CD4-positive, alpha-beta T cell (primary cell): ENCODE measurements at regions of chr10 and their contacts with region 1.

Region 1: GRCh38 chr10:17430647-17431355 is 23.6 kb downstream of the ST8SIA6 start:
- DNase-seq: peak; percentile 48 to 87 (median 64)
- ATAC-seq: no peak
- H3K4me3 ChIP-seq: no peak overlapping the region
- H3K4me3 Mint-ChIP-seq: peak overlapping the region; percentile 76
- H3K27ac ChIP-seq: no peak overlapping the region
- H3K27ac Mint-ChIP-seq: peak overlapping the region; percentile 93
- H3K4me1 ChIP-seq: peaks cover 46% of the 10 kb centered on the region
- H3K4me1 Mint-ChIP-seq: peaks cover 52% of the 10 kb centered on the region
- H3K27me3 ChIP-seq: no peaks in the 10 kb centered on the region
- H3K27me3 Mint-ChIP-seq: peaks cover 4% of the 10 kb centered on the region
- CTCF ChIP-seq: peak; percentile 98

Region 2: DNA sequence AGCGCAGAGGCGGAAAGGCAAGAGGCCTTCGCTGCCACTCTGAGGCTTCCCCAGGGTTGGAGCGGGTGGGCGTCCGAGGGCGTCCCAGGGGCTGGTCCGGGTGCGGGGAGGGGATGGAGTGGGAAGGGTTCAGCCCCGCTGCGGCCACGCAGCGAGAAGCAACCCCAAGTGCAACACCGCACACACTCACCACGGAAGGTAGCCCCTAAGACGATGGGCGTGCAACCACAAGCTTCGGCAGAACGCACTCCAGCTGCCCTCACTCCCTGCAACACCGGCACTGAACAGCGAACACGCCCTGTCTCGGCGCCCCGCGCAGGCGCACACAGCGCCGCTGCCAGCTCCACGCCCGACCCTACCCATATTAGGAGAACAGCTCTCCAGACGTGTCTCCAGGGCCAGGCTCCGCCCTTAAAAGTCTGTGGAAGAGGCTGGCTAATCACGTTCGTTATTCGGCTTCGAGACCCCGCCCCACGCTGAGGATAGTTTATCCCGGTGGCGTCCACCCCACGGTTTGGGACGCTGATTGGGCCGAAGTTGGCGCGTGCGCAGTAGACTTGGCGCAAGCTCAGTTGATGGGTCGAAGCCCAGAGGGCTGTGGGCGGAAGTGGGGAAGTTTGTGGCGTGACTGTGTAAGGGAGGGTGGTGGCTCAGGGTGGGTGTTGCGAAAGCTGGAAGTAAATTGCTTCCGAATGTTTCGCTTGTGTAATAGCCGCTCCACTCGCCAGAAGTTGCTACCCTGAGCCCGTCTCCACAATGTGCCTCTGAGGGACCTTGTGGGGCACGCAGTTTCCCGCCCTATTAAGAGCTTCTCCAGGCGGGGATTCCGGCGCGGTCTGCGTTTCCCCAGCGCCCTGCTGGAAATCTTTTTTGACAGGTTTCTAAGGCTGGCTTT is 613.4 kb before region 1 on chr10 and contains the start of gene RSU1:
- CTCF ChIA-PET with region 1: no interaction called
- POLR2A ChIA-PET with region 1: interaction called, 15 read pairs
- intact Hi-C with region 1: no loop called
- DNase-seq: peak; percentile 99 to 100 (median 100)
- ATAC-seq: peak; percentile 96
- H3K4me3 ChIP-seq: peak within 1 kb of the TSS; percentile 78
- H3K4me3 Mint-ChIP-seq: peak within 1 kb of the TSS; percentile 97
- H3K27ac ChIP-seq: peak within 1 kb of the TSS; percentile 82 to 87
- H3K27ac Mint-ChIP-seq: peak within 1 kb of the TSS; percentile 92
- H3K4me1 ChIP-seq: peaks cover 32% of the 10 kb centered on the region
- H3K4me1 Mint-ChIP-seq: peaks cover 50% of the 10 kb centered on the region
- H3K27me3 ChIP-seq: no peaks in the 10 kb centered on the region
- H3K27me3 Mint-ChIP-seq: no peaks in the 10 kb centered on the region
- CTCF ChIP-seq: no peak
- total RNA-seq, gene RSU1: 26.2 to 28.8 TPM

Region 3: DNA sequence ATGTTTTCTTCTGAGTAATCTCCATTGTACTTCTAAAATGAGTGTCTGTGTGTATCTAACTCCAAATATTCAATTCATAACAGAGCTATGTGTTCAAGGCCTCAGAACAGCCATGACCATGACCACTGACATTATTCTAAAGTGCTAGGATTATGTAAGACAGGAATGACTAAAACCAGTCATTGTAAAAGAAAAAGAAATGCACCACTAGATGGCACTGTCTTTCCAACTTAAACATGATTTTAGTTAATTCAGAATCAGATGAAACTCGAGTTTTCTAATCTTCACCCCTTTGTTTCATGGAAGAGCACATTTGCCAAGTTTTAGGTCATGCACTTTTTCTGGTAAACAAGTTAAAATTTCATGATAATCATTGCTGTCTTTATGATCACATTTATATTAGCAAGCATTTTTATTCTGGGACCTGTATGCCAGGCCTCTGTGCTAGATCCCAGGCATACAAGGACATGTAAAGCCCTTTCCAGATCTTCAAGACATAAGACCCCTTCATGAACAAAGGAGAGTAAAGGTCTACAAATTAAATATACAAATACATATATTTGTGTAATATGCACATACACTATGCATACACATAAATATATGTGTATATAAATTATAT is 587.4 kb before region 1 on chr10:
- CTCF ChIA-PET with region 1: no interaction called
- POLR2A ChIA-PET with region 1: no interaction called
- intact Hi-C with region 1: loop called (anchors 2 to 5 kb)
- DNase-seq: peak in 3 of 14 experiments; percentile 75 to 81 (median 79)
- ATAC-seq: peak; percentile 66
- H3K4me3 ChIP-seq: no peak overlapping the region
- H3K4me3 Mint-ChIP-seq: no peak overlapping the region
- H3K27ac ChIP-seq: no peak overlapping the region
- H3K27ac Mint-ChIP-seq: no peak overlapping the region
- H3K4me1 ChIP-seq: no peaks in the 10 kb centered on the region
- H3K4me1 Mint-ChIP-seq: peaks cover 7% of the 10 kb centered on the region
- H3K27me3 ChIP-seq: no peaks in the 10 kb centered on the region
- H3K27me3 Mint-ChIP-seq: no peaks in the 10 kb centered on the region
- CTCF ChIP-seq: peak; percentile 80

Region 4: DNA sequence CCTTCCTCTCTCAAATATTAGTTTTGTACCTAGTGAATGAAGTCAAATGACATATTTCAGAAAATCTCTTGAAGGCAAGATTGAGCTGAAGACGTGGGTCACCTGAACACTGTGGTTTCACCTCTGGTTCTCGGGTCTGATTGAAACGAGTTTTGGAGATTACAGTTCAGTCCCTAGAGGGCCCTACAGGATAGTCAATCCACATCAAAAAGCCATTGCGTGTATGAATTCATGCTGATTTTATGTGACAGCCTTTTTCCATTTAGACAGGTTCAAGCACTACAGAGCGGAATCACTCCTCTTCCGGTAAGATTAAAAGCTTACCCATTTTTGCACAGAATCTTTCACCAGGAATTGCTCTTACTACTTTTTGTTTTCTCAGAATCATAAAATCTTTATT is 140.6 kb before region 1 on chr10:
- CTCF ChIA-PET with region 1: no interaction called
- POLR2A ChIA-PET with region 1: interaction called, 4 read pairs
- intact Hi-C with region 1: loop called (anchors 1 to 2 kb)
- DNase-seq: peak in 4 of 14 experiments; percentile 8 to 45 (median 35)
- ATAC-seq: peak; percentile 66
- H3K4me3 ChIP-seq: no peak overlapping the region
- H3K4me3 Mint-ChIP-seq: no peak overlapping the region
- H3K27ac ChIP-seq: no peak overlapping the region
- H3K27ac Mint-ChIP-seq: no peak overlapping the region
- H3K4me1 ChIP-seq: no peaks in the 10 kb centered on the region
- H3K4me1 Mint-ChIP-seq: peaks cover 6% of the 10 kb centered on the region
- H3K27me3 ChIP-seq: no peaks in the 10 kb centered on the region
- H3K27me3 Mint-ChIP-seq: peaks cover 29% of the 10 kb centered on the region
- CTCF ChIP-seq: peak; percentile 34

Region 5: DNA sequence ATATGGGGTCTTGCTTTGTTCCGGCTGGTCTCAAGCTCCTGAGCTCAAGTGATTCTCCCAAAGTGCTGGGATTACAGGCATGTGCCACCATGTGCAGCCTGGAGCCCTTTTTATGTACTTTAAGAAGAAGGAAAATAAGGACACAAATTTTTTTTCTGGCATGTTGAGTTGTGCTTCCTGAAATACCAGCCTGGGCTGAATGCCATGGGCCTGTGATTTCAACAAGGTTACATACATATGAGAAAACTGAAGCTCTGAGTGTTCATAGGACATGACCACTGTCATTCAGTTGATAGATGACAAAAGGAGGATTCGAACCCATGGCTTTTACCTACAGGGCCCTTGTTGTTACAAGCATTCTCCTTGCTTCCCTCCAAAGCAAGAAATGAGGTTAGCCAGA is 12.6 kb before region 1 on chr10:
- CTCF ChIA-PET with region 1: no interaction called
- POLR2A ChIA-PET with region 1: interaction called, 29 read pairs
- intact Hi-C with region 1: no loop called
- DNase-seq: no peak
- ATAC-seq: no peak
- H3K4me3 ChIP-seq: no peak overlapping the region
- H3K4me3 Mint-ChIP-seq: no peak overlapping the region
- H3K27ac ChIP-seq: no peak overlapping the region
- H3K27ac Mint-ChIP-seq: no peak overlapping the region
- H3K4me1 ChIP-seq: peaks cover 2% of the 10 kb centered on the region
- H3K4me1 Mint-ChIP-seq: peaks cover 29% of the 10 kb centered on the region
- H3K27me3 ChIP-seq: no peaks in the 10 kb centered on the region
- H3K27me3 Mint-ChIP-seq: no peaks in the 10 kb centered on the region
- CTCF ChIP-seq: no peak

Region 6: GRCh38 chr10:18246961-18247360 is 816.2 kb after region 1 on chr10:
- CTCF ChIA-PET with region 1: no interaction called
- POLR2A ChIA-PET with region 1: no interaction called
- intact Hi-C with region 1: no loop called
- DNase-seq: no peak
- ATAC-seq: no peak
- H3K4me3 ChIP-seq: no peak overlapping the region
- H3K4me3 Mint-ChIP-seq: no peak overlapping the region
- H3K27ac ChIP-seq: no peak overlapping the region
- H3K27ac Mint-ChIP-seq: no peak overlapping the region
- H3K4me1 ChIP-seq: no peaks in the 10 kb centered on the region
- H3K4me1 Mint-ChIP-seq: no peaks in the 10 kb centered on the region
- H3K27me3 ChIP-seq: no peaks in the 10 kb centered on the region
- H3K27me3 Mint-ChIP-seq: no peaks in the 10 kb centered on the region
- CTCF ChIP-seq: no peak

Region 7: GRCh38 chr10:18659120-18659818 is 1228.5 kb after region 1 on chr10 and contains the start of gene ARL5B:
- CTCF ChIA-PET with region 1: no interaction called
- POLR2A ChIA-PET with region 1: no interaction called
- intact Hi-C with region 1: loop called in 1 of 2 experiments (anchors 10 kb)
- DNase-seq: peak; percentile 91 to 99 (median 96)
- ATAC-seq: peak; percentile 93
- H3K4me3 ChIP-seq: peak within 1 kb of the TSS; percentile 79
- H3K4me3 Mint-ChIP-seq: peak within 1 kb of the TSS; percentile 100
- H3K27ac ChIP-seq: peak within 1 kb of the TSS; percentile 94 to 97
- H3K27ac Mint-ChIP-seq: peak within 1 kb of the TSS; percentile 100
- H3K4me1 ChIP-seq: peaks cover 19% of the 10 kb centered on the region
- H3K4me1 Mint-ChIP-seq: peaks cover 50% of the 10 kb centered on the region
- H3K27me3 ChIP-seq: no peaks in the 10 kb centered on the region
- H3K27me3 Mint-ChIP-seq: no peaks in the 10 kb centered on the region
- CTCF ChIP-seq: no peak
- total RNA-seq, gene ARL5B: 12.4 to 13.3 TPM